ENCODE measurements at regions of chr12 and their contacts with region 1.

Region 1: GRCh38 chr12:110893956-110894355 is 26.4 kb downstream of the MYL2 start:
- DNase-seq: no peak
- H3K4me3 ChIP-seq: no peak overlapping the region
- H3K4me3 Mint-ChIP-seq: peak overlapping the region; percentile 40
- H3K27ac Mint-ChIP-seq: no peak overlapping the region
- H3K4me1 ChIP-seq: 0 out of 2 replicates have a peak, but pooled peaks cover 6% of the 10 kb centered on the region
- H3K4me1 Mint-ChIP-seq: no peaks in the 10 kb centered on the region
- H3K27me3 ChIP-seq: no peaks in the 10 kb centered on the region
- H3K27me3 Mint-ChIP-seq: peaks cover 8% of the 10 kb centered on the region
- CTCF ChIP-seq: no peak

Region 2: DNA sequence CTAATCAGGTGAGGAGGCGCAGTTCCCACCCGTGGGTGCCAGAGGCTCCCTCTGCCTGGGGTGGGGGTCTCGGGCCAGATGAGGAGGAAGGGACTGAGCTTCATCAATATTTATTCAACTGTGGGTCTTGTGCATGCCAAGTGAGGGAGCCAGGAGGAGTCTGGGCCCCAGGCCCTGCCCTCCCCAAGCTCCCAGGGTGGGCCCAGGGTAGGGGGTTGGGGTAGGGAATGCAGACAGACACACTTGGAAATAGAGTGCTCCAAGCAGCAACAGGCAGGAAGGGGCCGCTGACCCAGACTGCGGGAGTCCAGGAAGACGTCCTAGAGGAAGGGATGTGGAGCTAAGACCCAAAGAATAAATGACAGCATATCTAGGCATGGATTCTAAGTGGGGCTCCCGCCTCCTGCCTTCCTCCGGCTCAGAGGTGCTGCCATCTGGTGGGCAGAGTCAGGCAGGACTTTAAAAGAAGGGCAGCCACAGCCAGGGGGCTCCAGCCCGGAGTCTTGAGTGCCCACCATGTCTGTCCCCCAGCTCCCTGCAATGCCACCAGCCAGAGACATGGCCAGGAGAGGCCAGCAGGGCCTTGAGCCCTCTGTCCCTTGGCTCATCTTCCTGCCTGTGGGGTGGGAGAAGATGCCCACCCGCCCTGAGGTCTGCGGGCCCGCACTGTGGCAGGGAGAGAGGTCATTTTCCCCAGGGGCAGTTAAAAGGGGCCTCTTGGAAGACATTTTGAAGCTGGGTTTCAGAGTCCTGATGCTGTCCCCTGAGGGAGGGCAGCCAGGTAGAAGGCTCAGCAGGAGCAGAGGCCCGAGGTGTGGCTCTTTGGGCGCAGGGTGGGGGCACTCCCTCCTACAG is 404.9 kb after region 1 on chr12:
- CTCF ChIA-PET with region 1: no interaction called
- POLR2A ChIA-PET with region 1: no interaction called
- intact Hi-C with region 1: loop called (anchors 5 kb)
- DNase-seq: peak; percentile 55 to 72
- H3K4me3 ChIP-seq: no peak overlapping the region
- H3K4me3 Mint-ChIP-seq: no peak overlapping the region
- H3K27ac Mint-ChIP-seq: no peak overlapping the region
- H3K4me1 ChIP-seq: no peaks in the 10 kb centered on the region
- H3K4me1 Mint-ChIP-seq: no peaks in the 10 kb centered on the region
- H3K27me3 ChIP-seq: no peaks in the 10 kb centered on the region
- H3K27me3 Mint-ChIP-seq: no peaks in the 10 kb centered on the region
- CTCF ChIP-seq: peak; percentile 84 to 91

Region 3: GRCh38 chr12:111313833-111314259 is 419.9 kb after region 1 on chr12:
- CTCF ChIA-PET with region 1: no interaction called
- POLR2A ChIA-PET with region 1: no interaction called
- intact Hi-C with region 1: loop called (anchors 5 kb)
- DNase-seq: peak; percentile 66 to 79
- H3K4me3 ChIP-seq: no peak overlapping the region
- H3K4me3 Mint-ChIP-seq: no peak overlapping the region
- H3K27ac Mint-ChIP-seq: no peak overlapping the region
- H3K4me1 ChIP-seq: no peaks in the 10 kb centered on the region
- H3K4me1 Mint-ChIP-seq: no peaks in the 10 kb centered on the region
- H3K27me3 ChIP-seq: no peaks in the 10 kb centered on the region
- H3K27me3 Mint-ChIP-seq: peaks cover 17% of the 10 kb centered on the region
- CTCF ChIP-seq: peak; percentile 88 to 93